Naive thymus-derived CD4-positive, alpha-beta T cell (primary cell): ENCODE measurements at regions of chr2 and their contacts with region 1.

Region 1: GRCh38 chr2:200373973-200374416 is 67.5 kb downstream of the SPATS2L start:
- DNase-seq: peak in 7 of 9 donors; percentile 41 to 66 (median 56)
- ATAC-seq: peak; percentile 86
- H3K4me3 ChIP-seq: peak overlapping the region; percentile 74
- H3K4me3 Mint-ChIP-seq: peak overlapping the region; percentile 74 to 96 (median 89)
- H3K27ac ChIP-seq: peak overlapping the region; percentile 66
- H3K27ac Mint-ChIP-seq: peak overlapping the region; percentile 86 to 96 (median 93)
- H3K4me1 ChIP-seq: peaks cover 32 to 34% of the 10 kb centered on the region in 2 donors
- H3K4me1 Mint-ChIP-seq: peaks cover 24 to 59% (median 52%) of the 10 kb centered on the region in 7 donors
- H3K27me3 ChIP-seq: no peaks in the 10 kb centered on the region
- H3K27me3 Mint-ChIP-seq: no peaks in the 10 kb centered on the region

Region 2: GRCh38 chr2:199850718-199851500 is 523.1 kb before region 1 on chr2 and contains the start of gene FTCDNL1:
- CTCF ChIA-PET with region 1: no interaction called
- POLR2A ChIA-PET with region 1: no interaction called
- intact Hi-C with region 1: loop called in 1 of 2 experiments (anchors 5 kb)
- DNase-seq: peak; percentile 46 to 77 (median 65)
- ATAC-seq: peak; percentile 96
- H3K4me3 ChIP-seq: peak within 1 kb of the TSS; percentile 75
- H3K4me3 Mint-ChIP-seq: peak within 1 kb of the TSS; percentile 90 to 100 (median 94)
- H3K27ac ChIP-seq: peak within 1 kb of the TSS; percentile 44
- H3K27ac Mint-ChIP-seq: peak within 1 kb of the TSS; percentile 80 to 96 (median 89)
- H3K4me1 ChIP-seq: no peaks in the 10 kb centered on the region
- H3K4me1 Mint-ChIP-seq: peaks cover 0 to 10% (median 6%) of the 10 kb centered on the region in 7 donors
- H3K27me3 ChIP-seq: no peaks in the 10 kb centered on the region
- H3K27me3 Mint-ChIP-seq: peaks cover 0 to 20% (median 0%) of the 10 kb centered on the region in 5 donors
- total RNA-seq, gene FTCDNL1: 1.2 to 3.7 (median 2.6) TPM

Region 3: GRCh38 chr2:199955339-199956261 is 418.4 kb before region 1 on chr2 and contains the starts of genes MAIP1 and TYW5:
- CTCF ChIA-PET with region 1: no interaction called
- POLR2A ChIA-PET with region 1: no interaction called
- intact Hi-C with region 1: loop called in 1 of 2 experiments (anchors 5 kb)
- DNase-seq: peak; percentile 69 to 85 (median 79)
- ATAC-seq: peak; percentile 93
- H3K4me3 ChIP-seq: peak within 1 kb of the TSS; percentile 95
- H3K4me3 Mint-ChIP-seq: peak within 1 kb of the TSS; percentile 96 to 99 (median 98)
- H3K27ac ChIP-seq: peak within 1 kb of the TSS; percentile 84
- H3K27ac Mint-ChIP-seq: peak within 1 kb of the TSS; percentile 93 to 98 (median 95)
- H3K4me1 ChIP-seq: peaks cover 27 to 34% of the 10 kb centered on the region in 2 donors
- H3K4me1 Mint-ChIP-seq: peaks cover 31 to 72% (median 59%) of the 10 kb centered on the region in 7 donors
- H3K27me3 ChIP-seq: no peaks in the 10 kb centered on the region
- H3K27me3 Mint-ChIP-seq: no peaks in the 10 kb centered on the region
- total RNA-seq, gene MAIP1: 14.5 to 27.8 (median 19.8) TPM
- total RNA-seq, gene TYW5: 6.3 to 13.3 (median 11.2) TPM

Region 4: GRCh38 chr2:200405599-200406298 is 31.8 kb after region 1 on chr2:
- CTCF ChIA-PET with region 1: no interaction called
- POLR2A ChIA-PET with region 1: no interaction called
- intact Hi-C with region 1: loop called in 1 of 2 experiments (anchors 5 kb)
- DNase-seq: no peak
- ATAC-seq: peak; percentile 63
- H3K4me3 ChIP-seq: no peak overlapping the region
- H3K4me3 Mint-ChIP-seq: no peak overlapping the region
- H3K27ac ChIP-seq: no peak overlapping the region
- H3K27ac Mint-ChIP-seq: peak overlapping the region in 1 of 9 donors; percentile 14
- H3K4me1 ChIP-seq: no peaks in the 10 kb centered on the region
- H3K4me1 Mint-ChIP-seq: peaks cover 0 to 52% (median 8%) of the 10 kb centered on the region in 7 donors
- H3K27me3 ChIP-seq: no peaks in the 10 kb centered on the region
- H3K27me3 Mint-ChIP-seq: no peaks in the 10 kb centered on the region

Region 5: GRCh38 chr2:200509612-200510433 is 135.8 kb after region 1 on chr2 and contains the start of gene KCTD18:
- CTCF ChIA-PET with region 1: no interaction called
- POLR2A ChIA-PET with region 1: interaction called, 3 read pairs
- intact Hi-C with region 1: loop called in 1 of 2 experiments (anchors 5 kb)
- DNase-seq: peak; percentile 82 to 93 (median 87)
- ATAC-seq: peak; percentile 100
- H3K4me3 ChIP-seq: peak within 1 kb of the TSS; percentile 53
- H3K4me3 Mint-ChIP-seq: peak within 1 kb of the TSS; percentile 83 to 98 (median 94)
- H3K27ac ChIP-seq: peak within 1 kb of the TSS; percentile 74
- H3K27ac Mint-ChIP-seq: peak within 1 kb of the TSS; percentile 88 to 97 (median 95)
- H3K4me1 ChIP-seq: peaks cover 6 to 22% of the 10 kb centered on the region in 2 donors
- H3K4me1 Mint-ChIP-seq: peaks cover 10 to 51% (median 34%) of the 10 kb centered on the region in 7 donors
- H3K27me3 ChIP-seq: no peaks in the 10 kb centered on the region
- H3K27me3 Mint-ChIP-seq: no peaks in the 10 kb centered on the region
- total RNA-seq, gene KCTD18: 14.9 to 20.8 (median 18.6) TPM